GM12878 (cell line): ENCODE measurements at regions of chr3 and their contacts with region 1.

Region 1: DNA sequence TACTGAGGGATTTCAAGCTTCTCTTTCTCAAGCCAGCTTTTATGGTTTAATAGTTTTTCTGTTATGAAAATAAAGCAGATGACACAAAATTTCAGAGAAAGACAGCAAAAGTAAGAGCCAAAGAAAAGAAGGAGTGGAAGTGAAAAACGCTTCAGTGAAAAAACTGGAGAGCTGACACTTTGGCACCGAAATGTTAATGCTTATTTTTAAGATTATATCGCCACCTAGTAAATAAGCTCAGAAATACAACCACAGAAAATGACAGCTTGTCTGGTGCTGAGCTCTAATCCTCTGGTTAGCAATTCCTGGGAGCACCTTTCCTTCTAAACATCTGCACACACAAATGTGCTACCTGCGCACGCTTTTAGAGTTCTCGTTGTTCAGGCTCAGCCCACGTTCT is 101.6 kb downstream of the ZPLD1 start:
- DNase-seq: no peak
- ATAC-seq: peak; percentile 64
- H3K4me3 ChIP-seq: no peak overlapping the region
- H3K27ac ChIP-seq: no peak overlapping the region
- H3K4me1 ChIP-seq: no peaks in the 10 kb centered on the region
- H3K27me3 ChIP-seq: peaks cover 0 to 4% of the 10 kb centered on the region in 2 experiments; a peak in 1 of 4 replicates
- CTCF ChIP-seq: peak; percentile 34 to 56 (median 56); a peak in 5 of 6 replicates
- EP300 ChIP-seq: no peak
- POLR2A ChIP-seq: no peak
- RAD21 ChIP-seq: peak; percentile 70

Region 2: DNA sequence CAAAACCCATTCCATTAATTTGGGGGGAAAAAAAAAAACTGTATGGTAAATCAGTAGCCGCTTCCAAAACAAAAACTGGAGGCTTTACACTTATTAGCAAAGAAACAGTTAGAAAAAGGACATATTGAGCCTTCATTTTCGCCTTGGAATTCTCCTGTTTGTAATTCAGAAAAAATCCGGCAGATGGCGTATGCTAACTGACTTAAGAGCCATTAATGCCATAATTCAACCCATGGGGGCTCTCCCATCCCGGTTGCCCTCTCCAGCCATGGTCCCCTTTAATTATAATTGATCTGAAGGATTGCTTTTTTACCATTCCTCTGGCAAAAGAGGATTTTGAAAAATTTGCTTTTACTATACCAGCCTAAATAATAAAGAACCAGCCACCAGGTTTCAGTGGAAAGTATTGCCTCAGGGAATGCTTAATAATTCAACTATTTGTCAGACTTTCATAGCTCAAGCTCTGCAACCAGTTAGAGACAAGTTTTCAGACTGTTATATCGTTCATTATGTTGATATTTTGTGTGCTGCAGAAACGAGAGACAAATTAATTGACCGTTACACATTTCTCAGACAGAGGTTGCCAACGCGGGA is 840.6 kb before region 1 on chr3:
- CTCF ChIA-PET with region 1: no interaction called
- POLR2A ChIA-PET with region 1: no interaction called
- RAD21 ChIA-PET with region 1: no interaction called
- SMC1A ChIA-PET with region 1: no interaction called
- in situ Hi-C with region 1: no loop called
- intact Hi-C with region 1: loop called (anchors 5 kb)
- DNase-seq: no peak
- ATAC-seq: peak; percentile 58
- H3K4me3 ChIP-seq: no peak overlapping the region
- H3K27ac ChIP-seq: no peak overlapping the region
- H3K4me1 ChIP-seq: peaks cover 4% of the 10 kb centered on the region; the same call in 1 of the 2 replicates
- H3K27me3 ChIP-seq: no peaks in the 10 kb centered on the region
- CTCF ChIP-seq: peak; percentile 58 to 65 (median 59)
- EP300 ChIP-seq: no peak
- POLR2A ChIP-seq: no peak
- RAD21 ChIP-seq: peak; percentile 76

Region 3: DNA sequence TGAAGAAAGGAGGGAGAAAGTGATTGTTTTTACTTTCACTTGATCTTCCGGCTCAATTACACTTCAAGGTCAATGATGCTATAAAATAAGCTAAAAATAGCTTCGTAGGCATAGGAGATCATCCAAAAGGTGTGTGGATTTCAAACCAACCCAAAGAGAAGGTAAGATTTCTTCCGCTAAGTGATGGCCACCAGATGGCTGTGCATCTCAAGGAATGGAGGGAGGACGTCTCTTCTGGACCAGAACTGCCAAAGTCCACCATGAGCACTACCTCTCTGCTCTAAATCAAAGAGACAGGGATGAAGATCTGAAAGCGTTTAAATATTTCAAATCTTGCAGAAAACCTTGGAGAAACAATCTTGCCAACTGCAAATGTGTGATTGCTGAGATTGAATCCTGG is 300.8 kb before region 1 on chr3:
- CTCF ChIA-PET with region 1: interaction called, 314 read pairs
- POLR2A ChIA-PET with region 1: no interaction called
- RAD21 ChIA-PET with region 1: interaction called, 177 read pairs
- SMC1A ChIA-PET with region 1: interaction called, 158 read pairs
- in situ Hi-C with region 1: no loop called
- intact Hi-C with region 1: no loop called
- DNase-seq: no peak
- ATAC-seq: no peak
- H3K4me3 ChIP-seq: no peak overlapping the region
- H3K27ac ChIP-seq: no peak overlapping the region
- H3K4me1 ChIP-seq: peaks cover 9% of the 10 kb centered on the region; the same call in 1 of the 2 replicates
- H3K27me3 ChIP-seq: no peaks in the 10 kb centered on the region; a peak in 1 of 4 replicates
- CTCF ChIP-seq: peak in 1 of 3 experiments; percentile 24; a peak in 1 of 6 replicates
- EP300 ChIP-seq: no peak
- POLR2A ChIP-seq: no peak
- RAD21 ChIP-seq: peak; percentile 48

Region 4: DNA sequence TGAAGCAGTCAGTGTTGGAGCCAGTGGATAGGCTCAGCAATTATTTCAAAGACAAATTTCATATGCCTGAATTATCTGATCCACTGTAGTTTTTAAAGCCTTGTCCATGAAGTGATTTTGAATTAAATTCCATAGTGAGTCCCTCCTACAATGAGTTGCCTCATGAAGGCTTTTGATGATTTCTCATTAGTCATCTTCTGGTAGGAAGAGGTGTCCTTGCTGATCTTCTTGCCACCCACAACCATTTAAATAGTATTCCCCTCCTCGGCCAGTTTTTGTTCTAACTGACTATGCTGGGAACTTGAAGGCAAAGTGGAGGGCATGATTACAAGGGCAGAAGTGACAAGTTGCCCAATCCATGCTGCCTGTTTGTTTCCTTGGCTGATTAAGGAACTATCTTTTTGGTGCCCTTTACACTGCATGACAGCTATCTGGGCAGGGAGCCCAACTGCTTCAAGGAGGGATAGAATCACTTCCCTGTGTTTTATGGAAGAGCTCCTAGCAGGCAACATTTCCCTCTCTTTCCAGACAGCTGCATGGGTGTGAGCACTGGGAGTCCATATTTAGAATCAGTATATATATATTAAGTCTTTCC is 515.9 kb after region 1 on chr3:
- CTCF ChIA-PET with region 1: no interaction called
- POLR2A ChIA-PET with region 1: no interaction called
- RAD21 ChIA-PET with region 1: no interaction called
- SMC1A ChIA-PET with region 1: no interaction called
- in situ Hi-C with region 1: no loop called
- intact Hi-C with region 1: no loop called
- DNase-seq: no peak
- ATAC-seq: no peak
- H3K4me3 ChIP-seq: no peak overlapping the region
- H3K27ac ChIP-seq: no peak overlapping the region
- H3K4me1 ChIP-seq: no peaks in the 10 kb centered on the region
- H3K27me3 ChIP-seq: no peaks in the 10 kb centered on the region
- CTCF ChIP-seq: no peak
- EP300 ChIP-seq: no peak
- POLR2A ChIP-seq: no peak
- RAD21 ChIP-seq: no peak